Activated CD4-positive, alpha-beta memory T cell treated with anti-CD3 and anti-CD28 coated beads for 36 hours (primary cell): ENCODE measurements at regions of chr3 and their contacts with region 1.

Region 1: GRCh38 chr3:33023172-33024136 is 72.0 kb downstream of the CCR4 start:
- DNase-seq: no peak
- H3K4me3 Mint-ChIP-seq: peak overlapping the region; percentile 7
- H3K27ac Mint-ChIP-seq: peak overlapping the region; percentile 90
- H3K4me1 Mint-ChIP-seq: peaks cover 60% of the 10 kb centered on the region
- H3K27me3 Mint-ChIP-seq: no peaks in the 10 kb centered on the region

Region 2: GRCh38 chr3:32992322-32992692 is 31.1 kb before region 1 on chr3:
- CTCF ChIA-PET with region 1: interaction called, 7 read pairs
- POLR2A ChIA-PET with region 1: interaction called, 35 read pairs
- intact Hi-C with region 1: loop called (anchors 1 kb)
- DNase-seq: no peak
- H3K4me3 Mint-ChIP-seq: peak overlapping the region; percentile 73
- H3K27ac Mint-ChIP-seq: peak overlapping the region; percentile 92
- H3K4me1 Mint-ChIP-seq: peaks cover 87% of the 10 kb centered on the region
- H3K27me3 Mint-ChIP-seq: no peaks in the 10 kb centered on the region

Region 3: GRCh38 chr3:33006081-33006480 is 17.4 kb before region 1 on chr3:
- CTCF ChIA-PET with region 1: interaction called, 9 read pairs
- POLR2A ChIA-PET with region 1: interaction called, 20 read pairs
- intact Hi-C with region 1: loop called (anchors 1 kb)
- DNase-seq: peak; percentile 66
- H3K4me3 Mint-ChIP-seq: no peak overlapping the region
- H3K27ac Mint-ChIP-seq: peak overlapping the region; percentile 86
- H3K4me1 Mint-ChIP-seq: peaks cover 72% of the 10 kb centered on the region
- H3K27me3 Mint-ChIP-seq: no peaks in the 10 kb centered on the region

Region 4: DNA sequence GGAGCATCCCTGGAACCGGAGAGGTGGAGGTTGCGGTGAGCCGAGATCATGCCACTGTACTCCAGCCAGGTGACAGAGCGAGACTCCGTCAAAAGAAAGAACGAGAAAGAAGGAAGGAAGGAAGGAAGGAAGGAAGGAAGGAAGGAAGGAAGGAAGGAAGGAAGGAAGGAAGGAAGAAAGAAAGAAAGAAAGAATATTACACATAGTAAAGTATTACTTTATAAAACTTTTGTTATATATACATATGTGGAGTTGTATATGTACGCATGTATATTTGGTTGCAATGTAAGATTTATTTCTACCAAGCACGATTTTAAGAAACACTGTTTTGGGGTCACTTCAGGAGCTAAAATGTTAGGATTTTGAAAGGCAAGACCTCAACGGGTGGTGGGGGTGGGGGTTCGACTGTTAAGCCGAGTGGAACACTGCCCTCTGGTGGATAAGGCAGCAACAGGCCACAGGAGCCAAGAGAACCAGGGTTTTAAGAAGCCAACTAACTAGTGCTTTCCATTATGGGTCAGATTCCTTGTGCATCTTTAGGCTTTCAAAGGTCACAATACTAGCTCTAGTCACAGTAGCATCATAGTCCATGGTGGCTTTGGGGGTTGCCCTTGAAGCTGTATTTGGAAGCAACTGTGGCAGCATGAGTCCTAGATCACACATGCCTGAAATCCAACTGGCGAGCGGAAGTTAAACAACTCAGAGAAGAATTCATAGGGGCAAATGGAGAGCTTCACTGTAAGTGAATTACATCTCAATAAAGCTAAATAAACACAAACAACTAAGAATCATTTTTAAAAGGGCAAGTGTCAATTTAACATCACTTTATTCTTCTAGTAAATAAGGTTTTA is 51.0 kb after region 1 on chr3:
- CTCF ChIA-PET with region 1: interaction called, 41 read pairs
- POLR2A ChIA-PET with region 1: interaction called, 3 read pairs
- intact Hi-C with region 1: no loop called
- DNase-seq: peak; percentile 82
- H3K4me3 Mint-ChIP-seq: no peak overlapping the region
- H3K27ac Mint-ChIP-seq: peak overlapping the region; percentile 21
- H3K4me1 Mint-ChIP-seq: peaks cover 43% of the 10 kb centered on the region
- H3K27me3 Mint-ChIP-seq: no peaks in the 10 kb centered on the region